ENCODE measurements at regions of chr20 and their contacts with region 1.

Region 1: GRCh38 chr20:53915446-53916172 is 154.8 kb downstream of the BCAS1 start:
- DNase-seq: peak; percentile 76
- ATAC-seq: peak; percentile 88
- H3K4me3 Mint-ChIP-seq: peak overlapping the region; percentile 94
- H3K27ac Mint-ChIP-seq: peak overlapping the region; percentile 93
- H3K4me1 Mint-ChIP-seq: peaks cover 57% of the 10 kb centered on the region
- H3K27me3 Mint-ChIP-seq: no peaks in the 10 kb centered on the region
- CTCF ChIP-seq: no peak

Region 2: DNA sequence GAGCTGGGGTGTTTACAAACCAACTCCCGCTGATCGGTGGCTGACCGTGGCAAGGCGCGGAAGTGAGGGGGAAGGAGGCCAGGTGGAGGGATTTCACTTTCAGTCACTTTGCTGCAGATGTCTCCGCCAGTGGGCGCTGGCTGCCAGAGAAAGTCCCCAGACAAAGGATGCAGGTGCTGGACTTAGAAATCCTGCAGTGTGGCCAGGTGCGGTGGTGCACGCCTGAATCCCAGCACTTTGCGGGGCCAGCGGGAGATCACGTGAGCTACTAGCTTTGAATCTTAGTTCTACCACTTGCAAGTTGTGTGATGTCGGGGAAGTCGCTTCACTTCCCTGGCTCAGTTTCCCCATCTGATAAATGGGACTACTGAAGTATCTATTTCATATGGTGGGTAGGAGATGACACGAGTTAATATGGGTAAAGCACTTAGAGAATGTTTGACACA is 502.4 kb before region 1 on chr20:
- CTCF ChIA-PET with region 1: interaction called, 10 read pairs
- POLR2A ChIA-PET with region 1: no interaction called
- intact Hi-C with region 1: loop called (anchors 1 kb)
- DNase-seq: peak; percentile 43
- ATAC-seq: peak; percentile 70
- H3K4me3 Mint-ChIP-seq: peak overlapping the region; percentile 58
- H3K27ac Mint-ChIP-seq: no peak overlapping the region
- H3K4me1 Mint-ChIP-seq: peaks cover 6% of the 10 kb centered on the region
- H3K27me3 Mint-ChIP-seq: peaks cover 2% of the 10 kb centered on the region
- CTCF ChIP-seq: no peak

Region 3: DNA sequence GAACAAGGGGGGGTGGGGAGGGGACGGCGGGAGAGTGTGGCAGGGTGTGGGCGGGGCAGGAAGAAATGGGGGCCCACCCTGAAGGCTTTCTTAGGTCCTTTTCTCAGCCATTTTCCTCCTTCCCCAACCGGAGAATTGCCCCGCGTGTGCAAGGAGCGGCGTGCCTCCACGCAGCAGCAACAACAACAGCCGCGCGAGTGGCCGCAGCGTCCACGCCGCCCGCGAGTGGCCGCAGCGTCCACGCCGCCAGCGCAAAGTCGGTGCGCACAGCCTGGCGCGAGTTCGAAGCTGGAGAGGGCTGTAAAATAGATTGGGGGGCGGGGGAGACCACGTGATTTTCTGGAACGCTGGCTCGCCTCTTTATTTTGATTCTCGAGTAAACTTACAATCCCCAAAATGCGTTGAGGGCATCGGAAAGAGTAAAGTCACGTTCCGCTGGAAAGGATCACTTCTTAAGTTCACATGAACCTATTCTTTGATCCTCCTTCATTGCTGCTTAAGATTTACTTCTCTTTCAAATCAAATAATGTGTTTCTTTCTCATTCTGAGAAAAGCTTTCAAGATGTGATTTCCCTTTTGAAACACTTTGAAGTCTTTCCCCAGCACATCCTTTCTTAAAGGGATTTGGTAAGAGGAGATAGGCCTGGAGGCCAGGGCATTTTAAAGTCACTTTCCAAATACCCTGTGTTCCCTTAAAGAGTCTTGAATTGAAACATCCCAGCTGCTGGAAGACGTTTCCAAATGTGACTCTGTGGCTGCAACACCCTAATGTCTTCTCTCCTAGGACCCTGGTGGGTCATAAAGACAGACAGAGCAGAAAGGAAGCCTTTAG is 255.3 kb before region 1 on chr20:
- CTCF ChIA-PET with region 1: interaction called, 5 read pairs
- POLR2A ChIA-PET with region 1: interaction called, 11 read pairs
- intact Hi-C with region 1: loop called (anchors 2 kb)
- DNase-seq: no peak
- ATAC-seq: peak; percentile 31
- H3K4me3 Mint-ChIP-seq: peak overlapping the region; percentile 87
- H3K27ac Mint-ChIP-seq: peak overlapping the region; percentile 90
- H3K4me1 Mint-ChIP-seq: peaks cover 66% of the 10 kb centered on the region
- H3K27me3 Mint-ChIP-seq: no peaks in the 10 kb centered on the region
- CTCF ChIP-seq: no peak

Region 4: DNA sequence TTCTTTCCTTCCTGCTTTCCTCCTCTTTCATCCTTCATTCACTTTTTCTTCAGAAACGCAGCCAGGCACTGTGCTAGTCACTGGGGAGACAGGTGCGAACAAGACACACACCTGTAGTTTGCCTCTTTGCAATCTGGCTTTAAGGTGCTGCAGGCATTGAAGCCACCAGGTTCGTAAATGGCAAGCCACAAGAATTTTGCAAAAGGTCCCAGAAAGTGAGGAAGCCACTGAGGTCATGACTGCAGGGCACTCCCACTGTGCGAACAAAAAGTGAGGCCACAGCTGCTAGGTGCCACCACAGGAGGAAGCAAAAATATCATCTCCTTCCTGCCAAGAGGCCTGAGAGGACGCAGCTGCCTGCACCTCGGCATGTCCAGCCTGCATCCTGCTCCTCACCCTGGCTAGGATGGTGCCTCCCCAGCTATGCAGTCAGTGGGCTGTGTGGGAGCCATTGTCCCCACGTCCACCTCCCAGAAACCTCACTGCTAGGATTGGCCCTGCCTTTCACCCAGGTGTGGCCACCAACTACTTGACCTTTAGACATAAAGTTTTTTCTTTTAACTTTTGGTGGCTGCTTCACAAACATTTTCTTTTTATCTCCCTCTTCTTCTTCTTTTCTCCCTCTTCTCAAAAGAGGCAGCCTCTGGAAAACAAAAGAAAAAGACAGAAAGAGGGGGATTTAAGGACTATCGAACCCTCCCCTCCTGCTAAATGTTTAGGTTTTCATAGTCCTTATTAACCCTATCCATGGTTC is 76.0 kb before region 1 on chr20:
- CTCF ChIA-PET with region 1: interaction called, 10 read pairs
- POLR2A ChIA-PET with region 1: no interaction called
- intact Hi-C with region 1: loop called (anchors 2 kb)
- DNase-seq: peak; percentile 42
- ATAC-seq: peak; percentile 75
- H3K4me3 Mint-ChIP-seq: peak overlapping the region; percentile 57
- H3K27ac Mint-ChIP-seq: peak overlapping the region; percentile 89
- H3K4me1 Mint-ChIP-seq: peaks cover 75% of the 10 kb centered on the region
- H3K27me3 Mint-ChIP-seq: no peaks in the 10 kb centered on the region
- CTCF ChIP-seq: no peak

Region 5: DNA sequence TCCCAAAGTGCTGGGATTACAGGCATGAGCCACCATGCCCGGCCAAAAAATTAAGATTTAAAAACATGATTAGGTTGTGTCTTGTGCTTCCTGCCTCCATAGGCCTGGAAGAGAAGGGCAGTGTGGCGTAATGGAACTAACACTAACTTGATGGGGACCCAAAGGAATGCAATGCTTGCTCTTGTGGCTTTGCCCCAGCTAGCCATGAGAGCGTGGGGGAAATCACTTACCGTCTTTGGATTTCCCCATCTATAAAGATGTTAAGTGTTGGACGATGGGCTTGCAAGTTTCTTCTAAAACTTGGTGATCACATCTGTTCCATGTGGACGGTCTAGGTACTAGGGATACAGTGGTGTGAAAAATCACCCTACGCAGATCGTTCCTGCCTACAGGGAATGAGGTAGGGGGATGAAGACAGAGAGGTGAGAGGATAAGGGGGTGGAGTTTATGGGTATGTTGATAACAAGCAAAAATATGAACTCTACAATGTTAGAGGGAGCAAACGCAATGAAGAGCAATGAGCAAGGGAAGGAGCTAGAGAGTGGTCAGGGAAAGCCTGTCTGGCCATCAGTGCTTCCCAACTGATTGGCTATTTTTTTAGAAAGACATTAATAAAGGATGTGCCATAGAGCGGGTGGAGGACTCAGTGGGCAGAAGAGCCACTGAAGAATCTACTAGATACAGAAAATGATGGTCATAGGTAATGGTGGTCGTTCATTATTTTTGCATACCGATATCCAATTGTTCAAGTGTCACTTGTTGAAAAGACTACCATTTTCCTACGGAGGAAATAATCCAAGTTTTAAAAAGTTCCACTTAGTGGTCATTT is 10.4 kb before region 1 on chr20:
- CTCF ChIA-PET with region 1: interaction called, 15 read pairs
- POLR2A ChIA-PET with region 1: interaction called, 7 read pairs
- intact Hi-C with region 1: no loop called
- DNase-seq: no peak
- ATAC-seq: peak; percentile 70
- H3K4me3 Mint-ChIP-seq: peak overlapping the region; percentile 56
- H3K27ac Mint-ChIP-seq: peak overlapping the region; percentile 86
- H3K4me1 Mint-ChIP-seq: peaks cover 59% of the 10 kb centered on the region
- H3K27me3 Mint-ChIP-seq: no peaks in the 10 kb centered on the region
- CTCF ChIP-seq: no peak

Region 6: GRCh38 chr20:53939572-53940359 is 24.2 kb after region 1 on chr20:
- CTCF ChIA-PET with region 1: interaction called, 115 read pairs
- POLR2A ChIA-PET with region 1: interaction called, 182 read pairs
- intact Hi-C with region 1: loop called (anchors 1 kb)
- DNase-seq: peak; percentile 50
- ATAC-seq: peak; percentile 68
- H3K4me3 Mint-ChIP-seq: peak overlapping the region; percentile 62
- H3K27ac Mint-ChIP-seq: peak overlapping the region; percentile 82
- H3K4me1 Mint-ChIP-seq: peaks cover 88% of the 10 kb centered on the region
- H3K27me3 Mint-ChIP-seq: no peaks in the 10 kb centered on the region
- CTCF ChIP-seq: no peak

Region 7: DNA sequence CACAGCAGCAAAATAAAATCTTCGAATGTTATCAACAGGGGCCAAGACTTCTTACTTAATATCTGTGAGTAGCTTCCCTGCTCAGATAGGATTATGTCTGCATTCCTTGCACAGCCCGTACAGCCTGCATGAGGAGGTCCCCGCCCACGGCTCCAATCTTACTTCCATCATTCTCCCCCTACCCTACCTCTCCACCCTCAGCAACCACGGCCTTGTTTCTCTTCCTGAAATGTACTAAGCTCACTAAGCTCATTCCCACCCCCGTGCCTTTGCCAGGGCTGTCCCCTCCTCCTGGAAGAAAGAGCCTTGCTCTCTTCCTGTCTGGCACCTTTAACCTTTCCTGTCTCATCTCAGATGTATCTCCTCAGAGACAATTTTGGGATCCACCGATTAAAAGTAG is 34.4 kb after region 1 on chr20:
- CTCF ChIA-PET with region 1: no interaction called
- POLR2A ChIA-PET with region 1: no interaction called
- intact Hi-C with region 1: no loop called
- DNase-seq: no peak
- ATAC-seq: no peak
- H3K4me3 Mint-ChIP-seq: no peak overlapping the region
- H3K27ac Mint-ChIP-seq: peak overlapping the region; percentile 87
- H3K4me1 Mint-ChIP-seq: peaks cover 23% of the 10 kb centered on the region
- H3K27me3 Mint-ChIP-seq: no peaks in the 10 kb centered on the region
- CTCF ChIP-seq: no peak